Mammary epithelial cell (primary cell): ENCODE measurements at regions of chr12 and their contacts with region 1.

Region 1: GRCh38 chr12:12442548-12443071 is 85.7 kb downstream of the BORCS5 start:
- DNase-seq: peak; percentile 54
- H3K4me3 ChIP-seq: no peak overlapping the region
- H3K27ac ChIP-seq: peak overlapping the region; percentile 69
- H3K4me1 ChIP-seq: peaks cover 43% of the 10 kb centered on the region
- H3K27me3 ChIP-seq: no peaks in the 10 kb centered on the region
- CTCF ChIP-seq: no peak

Region 2: DNA sequence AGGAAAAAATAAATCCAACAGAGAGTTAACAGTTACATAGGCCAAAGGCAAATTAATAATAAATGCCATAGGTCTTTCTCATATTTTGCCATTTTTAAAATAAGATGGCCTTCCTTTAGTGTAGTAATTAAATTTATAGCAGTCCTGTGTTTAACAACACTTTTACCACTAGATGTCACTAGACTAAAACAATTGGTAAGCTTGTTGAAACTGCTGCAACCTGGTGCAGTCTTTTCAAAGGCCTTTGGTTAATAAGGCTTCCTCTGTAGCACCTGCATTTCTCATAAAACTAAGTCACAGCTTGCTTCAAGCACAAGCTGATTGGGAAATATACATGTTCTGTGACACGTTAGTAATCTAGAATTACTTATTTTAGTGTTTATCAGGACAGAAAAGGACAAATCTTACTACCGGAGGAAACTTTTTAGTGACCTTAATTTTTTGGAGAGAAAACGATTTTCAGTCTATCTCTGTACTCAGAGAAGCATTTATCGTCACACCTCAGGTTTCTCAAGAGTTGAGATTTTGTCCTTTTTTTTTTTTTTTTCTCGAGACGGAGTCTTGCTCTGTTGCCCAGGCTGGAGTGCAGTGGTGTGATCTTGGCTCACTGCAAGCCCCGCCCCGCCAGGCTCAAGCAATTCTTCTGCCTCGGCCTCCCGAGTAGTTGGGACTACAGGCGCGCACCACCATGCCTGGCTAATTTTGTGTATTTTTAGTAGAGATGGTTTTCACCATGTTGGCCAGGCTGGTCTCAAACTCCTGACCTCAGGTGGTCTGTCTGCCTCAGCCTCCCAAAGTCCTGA is 65.8 kb before region 1 on chr12:
- CTCF ChIA-PET with region 1: no interaction called
- dilution Hi-C with region 1: no loop called
- in situ Hi-C with region 1: no loop called
- intact Hi-C with region 1: no loop called
- DNase-seq: peak; percentile 68
- H3K4me3 ChIP-seq: no peak overlapping the region
- H3K27ac ChIP-seq: no peak overlapping the region
- H3K4me1 ChIP-seq: no peaks in the 10 kb centered on the region
- H3K27me3 ChIP-seq: no peaks in the 10 kb centered on the region
- CTCF ChIP-seq: peak; percentile 61 to 67

Region 3: GRCh38 chr12:12398026-12398859 is 44.4 kb before region 1 on chr12:
- CTCF ChIA-PET with region 1: interaction called, 9 read pairs
- dilution Hi-C with region 1: loop called (anchors 5 kb)
- in situ Hi-C with region 1: loop called in 1 of 2 experiments (anchors 10 kb)
- intact Hi-C with region 1: loop called (anchors 1 kb)
- DNase-seq: peak; percentile 90
- H3K4me3 ChIP-seq: no peak overlapping the region
- H3K27ac ChIP-seq: peak overlapping the region; percentile 42
- H3K4me1 ChIP-seq: peaks cover 21% of the 10 kb centered on the region
- H3K27me3 ChIP-seq: no peaks in the 10 kb centered on the region
- CTCF ChIP-seq: peak in 1 of 2 donors; percentile 9

Region 4: DNA sequence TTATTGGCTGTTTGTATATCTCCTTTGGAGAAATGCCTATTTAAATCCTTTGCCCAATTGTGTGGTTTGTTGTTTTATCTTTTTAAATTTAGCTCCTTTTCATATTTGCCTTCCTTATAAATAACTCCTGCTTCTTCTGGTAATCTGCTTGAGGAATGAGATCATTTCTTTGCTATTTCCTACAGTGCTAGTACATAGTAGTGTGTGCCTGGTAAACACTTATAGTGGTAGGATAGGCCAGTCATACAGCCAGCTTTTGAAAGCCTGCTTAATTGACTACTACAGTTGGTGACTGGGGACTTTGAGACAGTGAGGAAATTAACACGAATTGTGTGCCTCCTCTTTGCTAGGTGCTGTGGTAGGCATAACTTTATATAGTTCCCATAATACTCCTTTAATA is 17.0 kb before region 1 on chr12:
- CTCF ChIA-PET with region 1: no interaction called
- dilution Hi-C with region 1: no loop called
- in situ Hi-C with region 1: no loop called
- intact Hi-C with region 1: no loop called
- DNase-seq: no peak
- H3K4me3 ChIP-seq: no peak overlapping the region
- H3K27ac ChIP-seq: no peak overlapping the region
- H3K4me1 ChIP-seq: peaks cover 22% of the 10 kb centered on the region
- H3K27me3 ChIP-seq: no peaks in the 10 kb centered on the region
- CTCF ChIP-seq: no peak

Region 5: GRCh38 chr12:12510141-12510540 is 67.5 kb after region 1 on chr12:
- CTCF ChIA-PET with region 1: no interaction called
- dilution Hi-C with region 1: no loop called
- in situ Hi-C with region 1: no loop called
- intact Hi-C with region 1: loop called (anchors 5 kb)
- DNase-seq: peak; percentile 88
- H3K4me3 ChIP-seq: no peak overlapping the region
- H3K27ac ChIP-seq: peak overlapping the region; percentile 69
- H3K4me1 ChIP-seq: peaks cover 18% of the 10 kb centered on the region
- H3K27me3 ChIP-seq: no peaks in the 10 kb centered on the region
- CTCF ChIP-seq: no peak